ENCODE measurements at regions of chr20 and their contacts with region 1.

Region 1: GRCh38 chr20:45373353-45374100 is 4.6 kb downstream of the TP53TG5 start:
- DNase-seq: peak; percentile 57
- ATAC-seq: peak; percentile 92
- H3K4me3 ChIP-seq: no peak overlapping the region
- H3K27ac ChIP-seq: no peak overlapping the region
- H3K4me1 ChIP-seq: peaks cover 0 to 15% of the 10 kb centered on the region in 2 experiments; a peak in 2 of 4 replicates
- H3K27me3 ChIP-seq: no peaks in the 10 kb centered on the region
- CTCF ChIP-seq: peak; percentile 87 to 95 (median 93)
- POLR2A ChIP-seq: no peak
- RAD21 ChIP-seq: peak; percentile 89

Region 2: GRCh38 chr20:43878776-43879175 is 1494.8 kb before region 1 on chr20:
- CTCF ChIA-PET with region 1: no interaction called
- POLR2A ChIA-PET with region 1: no interaction called
- RAD21 ChIA-PET with region 1: no interaction called
- intact Hi-C with region 1: no loop called
- DNase-seq: no peak
- ATAC-seq: no peak
- H3K4me3 ChIP-seq: no peak overlapping the region
- H3K27ac ChIP-seq: no peak overlapping the region
- H3K4me1 ChIP-seq: no peaks in the 10 kb centered on the region
- H3K27me3 ChIP-seq: no peaks in the 10 kb centered on the region
- CTCF ChIP-seq: no peak
- POLR2A ChIP-seq: no peak
- RAD21 ChIP-seq: no peak

Region 3: GRCh38 chr20:45322952-45323383 is 50.6 kb before region 1 on chr20:
- CTCF ChIA-PET with region 1: interaction called, 10 read pairs
- POLR2A ChIA-PET with region 1: no interaction called
- RAD21 ChIA-PET with region 1: interaction called in 1 of 2 experiments, 4 read pairs
- intact Hi-C with region 1: no loop called
- DNase-seq: peak; percentile 31
- ATAC-seq: peak; percentile 68
- H3K4me3 ChIP-seq: no peak overlapping the region
- H3K27ac ChIP-seq: no peak overlapping the region
- H3K4me1 ChIP-seq: no peaks in the 10 kb centered on the region
- H3K27me3 ChIP-seq: no peaks in the 10 kb centered on the region
- CTCF ChIP-seq: peak; percentile 13 to 79 (median 28); a peak in 3 of 6 replicates
- POLR2A ChIP-seq: no peak
- RAD21 ChIP-seq: peak; percentile 91

Region 4: DNA sequence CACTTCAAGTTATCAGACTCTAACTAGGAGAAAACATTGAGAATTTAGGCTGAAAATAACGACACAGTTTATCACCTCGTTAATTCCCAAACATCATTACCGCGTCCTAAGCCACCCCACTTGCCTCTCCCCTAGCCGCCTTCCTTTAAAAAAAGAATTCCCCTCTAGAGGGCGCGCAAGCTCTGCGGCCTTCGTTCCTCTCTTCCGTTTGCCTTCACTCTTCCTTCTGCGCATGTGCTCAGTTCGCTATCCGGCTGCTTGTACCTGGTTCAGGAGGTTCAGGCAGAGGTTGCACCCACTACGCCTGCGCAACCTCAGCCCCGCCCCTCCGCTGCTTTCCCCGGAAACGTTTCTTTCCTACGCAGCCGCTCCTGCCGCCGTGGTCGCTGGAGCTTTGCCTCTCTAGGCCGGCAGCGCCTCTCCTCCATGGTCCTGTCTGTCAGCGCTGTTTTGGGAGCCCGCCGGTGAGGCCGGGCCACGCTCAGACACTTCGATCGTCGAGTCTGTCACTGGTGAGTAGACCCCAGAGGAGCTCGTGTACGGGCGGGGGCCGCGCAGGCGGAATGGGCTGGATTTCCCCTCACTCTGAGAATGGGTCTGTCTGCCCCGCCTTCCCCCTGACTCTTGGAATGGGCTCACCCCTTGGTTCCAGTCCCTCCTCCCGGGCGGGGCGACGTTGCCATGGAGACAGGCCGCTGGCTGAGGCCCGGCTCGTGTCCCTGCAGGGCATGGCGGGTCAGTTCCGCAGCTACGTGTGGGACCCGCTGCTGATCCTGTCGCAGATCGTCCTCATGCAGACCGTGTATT is 10.5 kb before region 1 on chr20 and contains the start of gene SYS1:
- CTCF ChIA-PET with region 1: interaction called, 22 read pairs
- POLR2A ChIA-PET with region 1: interaction called, 9 read pairs
- RAD21 ChIA-PET with region 1: no interaction called
- intact Hi-C with region 1: no loop called
- DNase-seq: peak; percentile 96
- ATAC-seq: peak; percentile 85
- H3K4me3 ChIP-seq: peak within 1 kb of the TSS; percentile 72 to 98
- H3K27ac ChIP-seq: peak within 1 kb of the TSS; percentile 80
- H3K4me1 ChIP-seq: peaks cover 40 to 50% of the 10 kb centered on the region in 2 experiments
- H3K27me3 ChIP-seq: no peaks in the 10 kb centered on the region
- CTCF ChIP-seq: peak; percentile 73 to 83 (median 79)
- POLR2A ChIP-seq: peak; percentile 76
- RAD21 ChIP-seq: peak; percentile 80
- total RNA-seq, gene SYS1: 20.5 TPM

Region 5: DNA sequence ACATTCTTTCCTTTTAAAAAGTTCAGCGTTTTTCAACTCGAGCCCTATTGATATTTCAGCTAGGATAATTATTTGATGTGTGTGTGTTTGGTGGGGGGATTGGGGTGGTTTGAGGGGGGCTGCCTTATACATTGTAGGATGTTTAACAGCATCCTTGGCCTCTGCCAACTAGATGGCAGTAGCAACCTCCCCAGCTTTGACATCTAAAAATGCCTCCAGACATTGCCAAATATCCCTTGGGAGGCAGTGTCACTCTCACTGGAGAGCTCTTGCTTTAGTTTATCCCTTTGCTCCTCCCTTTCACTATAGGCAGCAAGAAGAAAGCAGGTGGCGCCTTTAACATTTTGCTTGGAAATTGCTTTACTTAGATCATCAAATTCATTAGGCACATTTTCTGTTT is 19.2 kb after region 1 on chr20:
- CTCF ChIA-PET with region 1: interaction called, 10 read pairs
- POLR2A ChIA-PET with region 1: interaction called, 5 read pairs
- RAD21 ChIA-PET with region 1: no interaction called
- intact Hi-C with region 1: no loop called
- DNase-seq: no peak
- ATAC-seq: peak; percentile 32; the same call in 1 of the 2 replicates
- H3K4me3 ChIP-seq: no peak overlapping the region
- H3K27ac ChIP-seq: no peak overlapping the region
- H3K4me1 ChIP-seq: no peaks in the 10 kb centered on the region
- H3K27me3 ChIP-seq: no peaks in the 10 kb centered on the region
- CTCF ChIP-seq: no peak
- POLR2A ChIP-seq: no peak
- RAD21 ChIP-seq: peak; percentile 28; the same call in 1 of the 2 replicates

Region 6: DNA sequence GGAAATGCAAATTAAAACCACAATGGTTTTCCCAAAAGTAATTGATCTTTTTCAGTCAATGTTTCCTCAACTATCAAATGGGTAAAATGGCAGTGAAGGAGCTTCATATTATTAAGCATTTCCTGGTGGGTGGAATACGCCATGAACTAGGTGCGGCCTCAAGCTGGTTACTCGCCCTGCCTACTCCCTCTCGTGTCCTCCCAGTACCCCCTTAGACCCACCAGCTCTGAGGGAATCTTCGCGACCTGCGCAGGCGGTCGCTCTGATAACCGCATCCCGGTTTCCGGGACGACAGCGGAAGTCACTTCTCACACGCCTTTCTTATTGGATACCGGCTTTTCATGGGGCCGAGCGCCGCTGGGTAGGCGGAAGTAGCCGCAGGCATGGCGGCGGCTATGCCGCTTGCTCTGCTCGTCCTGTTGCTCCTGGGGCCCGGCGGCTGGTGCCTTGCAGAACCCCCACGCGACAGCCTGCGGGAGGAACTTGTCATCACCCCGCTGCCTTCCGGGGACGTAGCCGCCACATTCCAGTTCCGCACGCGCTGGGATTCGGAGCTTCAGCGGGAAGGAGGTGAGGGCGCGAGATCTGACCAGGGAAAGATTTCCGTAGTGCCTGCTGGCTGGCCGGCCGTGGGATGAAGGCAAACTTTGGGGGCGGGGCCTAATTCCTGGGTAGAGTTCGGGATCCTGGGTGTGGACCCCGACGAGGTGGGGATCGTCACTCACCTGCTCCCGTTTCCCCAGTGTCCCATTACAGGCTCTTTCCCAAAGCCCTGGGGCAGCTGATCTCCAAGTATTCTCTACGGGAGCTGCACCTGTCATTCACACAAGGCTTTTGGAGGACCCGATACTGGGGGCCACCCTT is 42.5 kb after region 1 on chr20 and contains the start of gene PIGT:
- CTCF ChIA-PET with region 1: interaction called, 9 read pairs
- POLR2A ChIA-PET with region 1: interaction called, 3 read pairs
- RAD21 ChIA-PET with region 1: no interaction called
- intact Hi-C with region 1: loop called (anchors 1 kb)
- DNase-seq: peak; percentile 63
- ATAC-seq: peak; percentile 97
- H3K4me3 ChIP-seq: peak within 1 kb of the TSS; percentile 96 to 98
- H3K27ac ChIP-seq: peak within 1 kb of the TSS; percentile 70
- H3K4me1 ChIP-seq: peaks cover 4 to 14% of the 10 kb centered on the region in 2 experiments; a peak in 3 of 4 replicates
- H3K27me3 ChIP-seq: no peaks in the 10 kb centered on the region
- CTCF ChIP-seq: no peak
- POLR2A ChIP-seq: no peak
- RAD21 ChIP-seq: no peak
- total RNA-seq, gene PIGT: 71.4 TPM

Region 7: DNA sequence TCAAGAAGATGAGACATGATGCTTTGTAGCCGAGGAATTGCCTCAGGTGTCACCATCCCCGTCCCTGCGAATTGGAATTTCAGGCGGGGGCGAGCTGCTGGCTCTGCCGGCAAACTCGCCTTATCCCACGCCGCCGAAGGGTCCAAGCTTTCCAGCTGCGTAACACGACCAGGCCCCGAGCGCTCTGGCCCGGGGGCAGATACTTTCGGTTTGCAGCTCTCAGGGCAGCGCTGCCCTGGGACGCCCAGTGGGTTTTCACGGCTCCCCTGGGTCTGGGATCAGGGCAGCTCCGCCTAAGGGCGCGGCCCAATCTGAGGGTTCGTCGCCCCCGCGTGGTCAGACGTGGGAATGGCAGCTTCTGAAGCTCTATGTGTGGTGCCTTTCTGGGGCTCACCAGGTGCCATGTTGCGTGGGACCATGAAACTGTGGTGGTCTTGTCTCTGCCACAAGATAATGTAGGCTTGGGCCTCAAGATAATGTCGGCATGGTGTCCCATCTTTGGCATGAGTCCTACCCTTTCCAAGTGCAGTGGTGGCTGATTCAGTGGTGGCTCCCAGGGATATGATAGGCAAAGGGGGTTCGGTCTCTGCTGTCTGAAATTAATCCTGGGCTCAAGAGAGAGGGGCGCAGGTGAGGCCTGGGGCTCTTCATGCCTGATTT is 63.3 kb after region 1 on chr20:
- CTCF ChIA-PET with region 1: interaction called, 61 read pairs
- POLR2A ChIA-PET with region 1: interaction called, 3 read pairs
- RAD21 ChIA-PET with region 1: interaction called in 1 of 2 experiments, 16 read pairs
- intact Hi-C with region 1: loop called (anchors 2 kb)
- DNase-seq: peak; percentile 63
- ATAC-seq: peak; percentile 99
- H3K4me3 ChIP-seq: peak overlapping the region; percentile 57 to 67
- H3K27ac ChIP-seq: no peak overlapping the region
- H3K4me1 ChIP-seq: peaks cover 0 to 12% of the 10 kb centered on the region in 2 experiments; a peak in 2 of 4 replicates
- H3K27me3 ChIP-seq: no peaks in the 10 kb centered on the region
- CTCF ChIP-seq: peak; percentile 90 to 94 (median 93)
- POLR2A ChIP-seq: no peak
- RAD21 ChIP-seq: peak; percentile 97

Region 8: GRCh38 chr20:45450097-45450818 is 76.7 kb after region 1 on chr20:
- CTCF ChIA-PET with region 1: interaction called, 13 read pairs
- POLR2A ChIA-PET with region 1: no interaction called
- RAD21 ChIA-PET with region 1: no interaction called
- intact Hi-C with region 1: no loop called
- DNase-seq: peak; percentile 31
- ATAC-seq: peak; percentile 70
- H3K4me3 ChIP-seq: no peak overlapping the region
- H3K27ac ChIP-seq: no peak overlapping the region
- H3K4me1 ChIP-seq: no peaks in the 10 kb centered on the region; a peak in 1 of 4 replicates
- H3K27me3 ChIP-seq: no peaks in the 10 kb centered on the region
- CTCF ChIP-seq: peak; percentile 60 to 78 (median 71); a peak in 5 of 6 replicates
- POLR2A ChIP-seq: no peak
- RAD21 ChIP-seq: peak; percentile 65

Measured in HCT116 (cell line).